Tibial artery (tissue), 4 donors: ENCODE measurements at regions of chr3 and their contacts with region 1.

Region 1: DNA sequence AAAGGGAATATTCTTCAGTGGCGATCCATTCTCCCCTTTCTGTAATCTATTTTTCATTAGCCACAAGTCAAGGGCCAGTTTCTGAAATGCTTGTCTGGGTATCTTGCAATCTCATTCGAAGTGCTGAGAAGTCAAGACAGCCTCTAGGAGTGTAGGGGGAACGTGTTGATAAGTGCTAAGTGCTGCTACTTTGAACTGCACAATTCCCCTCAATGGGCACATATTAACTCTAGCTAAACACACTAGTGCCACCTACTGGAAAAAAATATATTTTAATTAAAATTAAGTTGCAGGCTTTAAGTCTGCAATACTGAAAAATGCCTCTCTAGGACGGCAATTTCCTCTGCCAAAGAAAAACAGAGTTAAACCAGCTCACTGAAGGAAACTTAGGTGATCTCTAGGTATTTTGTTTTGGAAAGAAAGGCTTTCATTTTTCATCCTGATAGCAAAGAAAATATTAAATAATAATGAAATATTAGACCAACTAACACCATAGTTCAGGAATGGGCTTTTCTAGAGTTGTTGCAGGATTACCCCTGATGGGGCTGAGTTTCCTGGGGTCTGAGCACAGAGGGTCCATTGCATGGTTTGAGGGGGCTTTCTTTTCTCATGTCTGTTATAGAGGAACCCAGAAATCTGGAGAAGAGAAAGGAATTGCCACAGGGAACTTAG is 181.9 kb upstream of the KBTBD8 start:
- DNase-seq: no peak
- H3K4me3 ChIP-seq: no peak overlapping the region
- H3K27ac ChIP-seq: no peak overlapping the region
- H3K4me1 ChIP-seq: peaks cover 0 to 4% (median 0%) of the 10 kb centered on the region in 4 donors
- H3K27me3 ChIP-seq: no peaks in the 10 kb centered on the region
- CTCF ChIP-seq: peak; percentile 55 to 68

Region 2: GRCh38 chr3:66276705-66277274 is 539.4 kb before region 1 on chr3:
- intact Hi-C with region 1: loop called (anchors 2 kb)
- DNase-seq: peak in 1 of 2 donors; percentile 55
- H3K4me3 ChIP-seq: no peak overlapping the region
- H3K27ac ChIP-seq: no peak overlapping the region
- H3K4me1 ChIP-seq: no peaks in the 10 kb centered on the region
- H3K27me3 ChIP-seq: no peaks in the 10 kb centered on the region
- CTCF ChIP-seq: peak; percentile 64 to 77

Region 3: DNA sequence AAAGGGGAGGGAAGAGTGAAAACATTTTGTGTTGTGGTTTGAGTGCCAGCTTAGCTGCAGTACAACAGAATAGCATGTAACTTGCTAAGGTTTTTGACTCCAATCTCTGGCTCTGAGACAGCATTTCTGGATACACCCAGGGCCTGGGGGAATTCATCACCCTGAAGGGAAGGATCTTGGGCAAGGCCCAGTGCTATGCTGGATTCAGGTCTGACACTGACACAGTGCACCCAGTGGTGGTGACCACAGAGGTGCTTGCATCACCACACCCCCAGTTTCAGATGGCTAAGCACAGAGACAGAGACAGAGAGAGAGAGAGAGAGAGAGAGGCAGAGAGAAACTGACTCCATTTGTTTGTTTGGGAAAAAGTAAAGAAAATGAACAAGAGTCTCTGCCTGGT is 107.7 kb after region 1 on chr3:
- intact Hi-C with region 1: no loop called
- DNase-seq: no peak
- H3K4me3 ChIP-seq: no peak overlapping the region
- H3K27ac ChIP-seq: no peak overlapping the region
- H3K4me1 ChIP-seq: no peaks in the 10 kb centered on the region
- H3K27me3 ChIP-seq: no peaks in the 10 kb centered on the region
- CTCF ChIP-seq: no peak